ENCODE measurements at regions of chr1 and their contacts with region 1.

Region 1: DNA sequence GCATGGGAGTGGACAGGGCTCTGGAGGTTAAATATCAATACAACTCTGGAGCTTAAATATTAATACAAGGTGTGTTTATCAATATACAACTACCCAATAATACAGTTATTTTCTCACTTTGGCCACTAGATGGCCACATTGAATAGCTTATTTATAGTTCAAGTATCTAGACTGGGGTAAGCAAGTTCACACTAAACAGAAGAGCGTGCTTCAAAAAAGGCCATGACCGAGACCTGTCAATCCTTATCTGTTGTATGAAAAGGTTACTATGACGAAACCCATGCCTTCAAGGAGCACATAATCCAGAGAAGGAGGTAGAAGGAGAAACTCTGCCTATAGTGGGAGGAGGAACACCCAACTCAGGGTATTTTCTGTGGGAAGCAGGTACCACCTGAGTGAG is 29.1 kb downstream of the CHML start:
- DNase-seq: no peak
- H3K4me3 Mint-ChIP-seq: no peak overlapping the region
- H3K27ac Mint-ChIP-seq: no peak overlapping the region
- H3K4me1 Mint-ChIP-seq: peaks cover 11% of the 10 kb centered on the region
- H3K27me3 Mint-ChIP-seq: no peaks in the 10 kb centered on the region

Region 2: DNA sequence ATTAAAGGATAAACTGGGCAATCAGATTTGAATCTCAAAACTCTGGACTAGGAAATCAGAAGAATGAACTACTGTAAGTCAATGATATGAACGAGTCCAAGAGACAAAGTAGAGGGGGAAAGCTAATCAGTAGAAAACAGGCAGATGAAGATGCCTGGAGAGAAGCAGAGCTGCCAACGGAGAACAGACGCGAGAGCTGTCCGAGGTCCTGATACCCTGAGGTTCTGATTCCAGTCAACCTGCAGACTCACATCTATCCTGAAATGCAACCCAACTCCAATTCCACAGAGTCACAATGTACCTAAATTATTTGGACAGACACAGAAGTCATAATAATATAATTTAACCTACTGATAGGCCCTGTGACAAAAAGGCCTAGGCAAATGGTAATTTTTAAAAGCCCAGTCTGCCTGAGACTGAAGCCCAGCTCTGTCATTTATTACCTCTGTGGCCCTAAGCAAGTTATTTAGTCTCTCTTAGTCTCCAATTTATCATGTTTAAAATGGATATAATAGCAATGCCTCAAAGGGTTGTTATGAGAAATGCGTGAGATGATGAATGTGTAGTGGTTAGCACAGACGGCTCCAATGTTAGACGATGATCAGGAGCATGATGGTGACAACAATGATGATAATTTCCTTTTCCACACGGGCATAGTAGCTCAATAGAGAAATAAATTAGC is 287.4 kb before region 1 on chr1:
- CTCF ChIA-PET with region 1: no interaction called
- POLR2A ChIA-PET with region 1: no interaction called
- intact Hi-C with region 1: no loop called
- DNase-seq: peak; percentile 29
- H3K4me3 Mint-ChIP-seq: no peak overlapping the region
- H3K27ac Mint-ChIP-seq: no peak overlapping the region
- H3K4me1 Mint-ChIP-seq: no peaks in the 10 kb centered on the region
- H3K27me3 Mint-ChIP-seq: no peaks in the 10 kb centered on the region

Region 3: GRCh38 chr1:241531195-241532161 is 79.6 kb before region 1 on chr1:
- CTCF ChIA-PET with region 1: interaction called, 8 read pairs
- POLR2A ChIA-PET with region 1: no interaction called
- intact Hi-C with region 1: loop called (anchors 1 kb)
- DNase-seq: no peak
- H3K4me3 Mint-ChIP-seq: peak overlapping the region; percentile 84
- H3K27ac Mint-ChIP-seq: peak overlapping the region; percentile 85
- H3K4me1 Mint-ChIP-seq: peaks cover 20% of the 10 kb centered on the region
- H3K27me3 Mint-ChIP-seq: no peaks in the 10 kb centered on the region

Region 4: DNA sequence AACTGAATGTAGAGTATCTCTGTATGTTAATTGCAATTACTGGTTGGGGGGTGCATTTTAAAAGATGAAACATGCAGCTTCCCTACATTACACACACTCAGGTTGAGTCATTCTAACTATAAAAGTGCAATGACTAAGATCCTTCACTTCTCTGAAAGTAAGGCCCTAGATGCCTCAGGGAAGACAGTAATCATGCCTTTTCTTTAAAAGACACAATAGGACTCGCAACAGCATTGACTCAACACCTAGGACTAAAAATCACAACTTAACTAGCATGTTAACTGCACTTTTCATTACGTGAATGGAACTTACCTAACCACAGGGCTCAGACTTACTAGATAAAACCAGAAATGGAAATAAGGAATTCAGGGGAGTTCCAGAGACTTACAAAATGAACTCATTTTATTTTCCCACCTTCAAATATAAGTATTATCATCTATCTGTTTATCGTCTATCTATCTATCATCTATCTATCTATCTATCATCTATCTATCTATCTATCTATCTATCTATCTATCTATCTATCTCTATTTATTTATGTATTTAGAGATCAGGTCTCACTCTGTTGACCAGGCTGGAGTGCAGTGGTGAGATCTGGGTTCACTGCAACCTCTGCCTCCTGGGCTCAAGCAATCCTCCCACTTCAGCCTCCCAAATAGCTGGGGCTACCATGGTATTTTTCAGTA is 18.6 kb before region 1 on chr1:
- CTCF ChIA-PET with region 1: interaction called, 12 read pairs
- POLR2A ChIA-PET with region 1: no interaction called
- intact Hi-C with region 1: loop called (anchors 1 kb)
- DNase-seq: no peak
- H3K4me3 Mint-ChIP-seq: no peak overlapping the region
- H3K27ac Mint-ChIP-seq: peak overlapping the region; percentile 49
- H3K4me1 Mint-ChIP-seq: peaks cover 27% of the 10 kb centered on the region
- H3K27me3 Mint-ChIP-seq: no peaks in the 10 kb centered on the region

Region 5: GRCh38 chr1:241627453-241628259 is 16.6 kb after region 1 on chr1:
- CTCF ChIA-PET with region 1: interaction called, 64 read pairs
- POLR2A ChIA-PET with region 1: interaction called, 3 read pairs
- intact Hi-C with region 1: loop called (anchors 1 kb)
- DNase-seq: peak; percentile 36
- H3K4me3 Mint-ChIP-seq: peak overlapping the region; percentile 14
- H3K27ac Mint-ChIP-seq: peak overlapping the region; percentile 20
- H3K4me1 Mint-ChIP-seq: peaks cover 10% of the 10 kb centered on the region
- H3K27me3 Mint-ChIP-seq: no peaks in the 10 kb centered on the region

Region 6: DNA sequence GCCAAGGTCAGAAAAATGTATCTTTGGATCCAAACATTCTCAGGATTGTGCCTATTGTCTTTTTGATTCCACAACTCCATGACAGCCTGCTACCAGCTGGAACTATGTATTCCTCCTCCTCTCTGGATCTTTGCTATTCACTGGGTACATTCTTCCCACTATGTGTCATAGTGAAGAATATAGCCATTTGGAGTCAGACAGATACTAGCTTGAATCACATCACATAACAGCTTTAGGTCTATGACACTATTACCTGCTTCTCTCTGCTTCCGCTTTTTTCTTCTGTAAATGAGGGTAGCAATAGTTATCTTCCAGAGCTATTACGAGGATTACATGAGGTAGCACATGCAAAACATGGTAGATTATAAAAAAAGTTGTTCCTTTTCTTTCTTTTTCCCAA is 231.5 kb after region 1 on chr1:
- CTCF ChIA-PET with region 1: interaction called, 11 read pairs
- POLR2A ChIA-PET with region 1: no interaction called
- intact Hi-C with region 1: no loop called
- DNase-seq: no peak
- H3K4me3 Mint-ChIP-seq: no peak overlapping the region
- H3K27ac Mint-ChIP-seq: no peak overlapping the region
- H3K4me1 Mint-ChIP-seq: peaks cover 8% of the 10 kb centered on the region
- H3K27me3 Mint-ChIP-seq: no peaks in the 10 kb centered on the region

Region 7: DNA sequence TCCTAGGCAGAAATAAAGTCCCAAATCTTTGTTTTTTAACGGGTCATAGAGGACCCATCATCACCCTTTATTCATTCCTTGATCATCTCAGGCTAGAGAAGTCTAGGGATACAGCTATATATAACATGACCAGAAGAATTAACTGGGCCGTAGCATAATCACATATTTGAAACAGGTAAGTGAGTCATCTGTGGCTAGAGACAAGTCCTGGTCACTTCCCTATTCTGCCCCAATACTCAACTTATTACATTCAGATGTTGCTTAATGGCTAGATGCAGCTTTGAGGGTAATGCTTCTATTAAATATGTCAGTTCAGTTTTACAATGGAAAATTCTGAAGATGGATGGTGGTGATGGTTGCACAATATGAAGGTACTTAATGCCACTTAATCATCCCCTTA is 283.9 kb after region 1 on chr1:
- CTCF ChIA-PET with region 1: interaction called, 15 read pairs
- POLR2A ChIA-PET with region 1: no interaction called
- intact Hi-C with region 1: no loop called
- DNase-seq: no peak
- H3K4me3 Mint-ChIP-seq: no peak overlapping the region
- H3K27ac Mint-ChIP-seq: no peak overlapping the region
- H3K4me1 Mint-ChIP-seq: no peaks in the 10 kb centered on the region
- H3K27me3 Mint-ChIP-seq: no peaks in the 10 kb centered on the region

Region 8: DNA sequence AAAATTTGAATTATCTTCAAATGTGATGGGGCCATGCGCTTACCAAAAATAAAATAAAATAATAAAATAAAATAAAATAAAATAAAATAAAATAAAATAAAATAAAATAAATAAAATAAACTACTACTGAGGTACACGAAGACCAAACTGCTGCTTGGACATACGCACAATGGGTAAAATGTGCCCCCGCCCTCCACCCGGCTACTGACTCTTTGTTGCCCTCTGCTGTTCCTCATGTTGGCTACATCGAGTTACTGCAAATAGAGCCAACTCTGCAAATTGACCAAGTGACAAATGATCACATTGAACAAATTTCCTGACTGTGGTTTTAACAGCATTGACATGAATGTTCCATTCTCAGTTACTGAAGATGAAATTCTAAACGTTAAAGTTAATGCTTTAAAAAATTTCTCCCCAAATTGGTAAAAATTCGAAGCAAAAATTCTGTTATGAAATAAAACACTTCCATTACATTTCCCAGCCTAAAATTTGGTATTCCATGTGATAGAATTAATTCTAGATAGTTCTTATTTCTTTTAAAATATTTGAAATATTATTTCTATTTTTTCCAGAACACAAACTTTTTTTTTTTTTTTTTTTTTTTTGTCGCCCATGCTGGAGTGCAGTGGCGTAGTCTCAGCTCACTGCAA is 406.6 kb after region 1 on chr1:
- CTCF ChIA-PET with region 1: interaction called, 10 read pairs
- POLR2A ChIA-PET with region 1: no interaction called
- intact Hi-C with region 1: loop called (anchors 2 kb)
- DNase-seq: peak; percentile 50
- H3K4me3 Mint-ChIP-seq: no peak overlapping the region
- H3K27ac Mint-ChIP-seq: no peak overlapping the region
- H3K4me1 Mint-ChIP-seq: no peaks in the 10 kb centered on the region
- H3K27me3 Mint-ChIP-seq: no peaks in the 10 kb centered on the region

Measured in activated CD4-positive, alpha-beta memory T cell treated with anti-CD3 and anti-CD28 coated beads for 36 hours (primary cell).